ENCODE measurements at regions of chr6 and their contacts with region 1.

Region 1: DNA sequence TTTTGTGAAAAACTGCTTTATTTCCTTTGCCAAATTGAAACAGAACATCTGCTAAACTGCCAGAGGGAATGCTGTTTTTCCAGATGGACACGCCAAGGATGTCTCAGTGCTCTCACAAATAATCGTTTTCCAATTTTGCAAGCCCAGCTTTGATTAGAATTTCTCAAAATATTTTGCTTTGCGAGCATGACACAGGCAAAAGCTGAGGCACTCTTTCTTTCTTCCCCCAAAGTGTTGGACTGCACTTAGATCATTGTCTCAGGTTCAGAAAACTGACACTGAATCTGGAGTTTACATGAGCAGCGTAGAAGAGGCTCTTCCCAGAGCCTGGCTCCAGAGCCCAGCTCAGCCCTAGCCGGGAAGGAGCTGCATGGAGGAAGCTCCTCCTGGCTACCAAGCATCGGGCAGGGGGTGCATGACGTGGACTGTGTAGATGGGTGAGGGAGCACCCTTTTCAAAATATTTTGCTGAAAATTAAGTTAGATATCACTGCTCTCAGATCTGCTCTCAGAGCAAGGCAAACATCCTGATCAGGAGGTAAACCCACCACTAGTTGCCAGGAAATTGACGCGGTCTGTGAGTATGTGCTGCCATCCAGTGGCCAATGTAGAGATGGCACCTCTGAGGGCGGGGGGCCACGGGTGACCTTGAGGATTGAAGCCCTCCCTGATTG is 107.5 kb downstream of the SLC22A3 start:
- H3K4me3 ChIP-seq: no peak overlapping the region
- H3K27ac ChIP-seq: no peak overlapping the region
- H3K4me1 ChIP-seq: no peaks in the 10 kb centered on the region
- CTCF ChIP-seq: peak; percentile 93

Region 2: DNA sequence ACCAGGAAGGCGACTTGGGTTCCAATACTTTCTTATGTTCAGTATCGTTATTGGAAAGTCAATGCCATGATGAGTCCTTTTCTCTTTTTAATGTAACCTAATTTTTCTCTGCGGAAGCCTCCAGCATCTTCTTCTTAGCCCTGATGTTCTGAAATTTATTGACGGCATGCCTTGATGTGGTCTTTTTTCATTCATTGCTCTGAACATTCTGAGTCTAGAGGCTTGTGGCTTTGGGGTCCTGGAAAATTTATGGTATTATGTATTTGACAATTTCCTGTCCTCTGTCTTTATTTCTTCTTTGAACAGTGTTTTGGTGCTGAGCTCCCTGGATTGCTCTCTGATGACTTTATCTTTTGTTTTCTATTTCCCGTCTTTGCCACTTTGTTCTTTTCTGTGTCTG is 593.6 kb before region 1 on chr6:
- CTCF ChIA-PET with region 1: interaction called, 27 read pairs
- POLR2A ChIA-PET with region 1: no interaction called
- H3K4me3 ChIP-seq: no peak overlapping the region
- H3K27ac ChIP-seq: no peak overlapping the region
- H3K4me1 ChIP-seq: no peaks in the 10 kb centered on the region
- CTCF ChIP-seq: no peak

Region 3: GRCh38 chr6:160088069-160088783 is 367.5 kb before region 1 on chr6:
- CTCF ChIA-PET with region 1: interaction called, 44 read pairs
- POLR2A ChIA-PET with region 1: no interaction called
- H3K4me3 ChIP-seq: no peak overlapping the region
- H3K27ac ChIP-seq: no peak overlapping the region
- H3K4me1 ChIP-seq: no peaks in the 10 kb centered on the region
- CTCF ChIP-seq: no peak

Region 4: DNA sequence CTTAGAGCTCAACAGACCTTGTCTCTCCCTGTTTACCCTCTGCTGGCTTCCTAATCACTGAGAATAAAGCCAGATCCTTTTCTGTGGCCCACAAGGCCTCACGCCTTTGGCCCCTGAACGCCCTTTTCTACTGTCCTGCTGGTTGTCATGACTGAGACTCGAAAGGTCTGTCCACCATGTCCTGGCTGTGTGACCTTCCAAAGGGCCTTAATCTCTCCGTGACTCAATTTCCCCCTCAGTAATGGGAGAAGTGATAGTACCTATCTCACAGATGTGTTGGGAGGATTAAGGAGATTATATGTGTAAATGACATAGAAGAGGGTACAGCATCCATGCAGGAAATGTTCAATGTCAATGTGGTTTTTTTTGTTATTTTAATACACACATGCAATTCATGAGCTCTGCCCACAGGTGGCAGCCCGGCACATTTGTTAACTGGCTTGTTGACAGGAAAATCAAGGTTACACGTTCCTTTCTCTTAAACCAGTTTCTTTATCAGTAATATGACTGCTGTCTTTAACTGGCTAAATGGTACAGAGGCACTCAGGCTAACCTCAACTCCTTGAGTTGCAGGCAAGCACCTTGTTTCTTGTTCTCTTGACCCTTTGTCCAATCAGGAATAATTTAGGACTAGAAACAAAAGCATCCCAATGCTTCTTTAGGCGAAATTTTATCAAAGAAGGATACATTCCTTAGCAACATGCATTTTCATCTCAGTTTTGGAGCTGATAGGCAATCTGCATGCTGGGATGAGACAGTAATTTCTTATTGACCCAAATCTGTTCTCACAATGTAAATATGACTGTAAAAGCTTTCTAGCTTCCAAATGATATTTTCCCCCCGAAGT is 317.5 kb before region 1 on chr6:
- CTCF ChIA-PET with region 1: interaction called, 43 read pairs
- POLR2A ChIA-PET with region 1: no interaction called
- H3K4me3 ChIP-seq: no peak overlapping the region
- H3K27ac ChIP-seq: no peak overlapping the region
- H3K4me1 ChIP-seq: no peaks in the 10 kb centered on the region
- CTCF ChIP-seq: peak; percentile 39; the same call in 1 of the 2 replicates

Region 5: DNA sequence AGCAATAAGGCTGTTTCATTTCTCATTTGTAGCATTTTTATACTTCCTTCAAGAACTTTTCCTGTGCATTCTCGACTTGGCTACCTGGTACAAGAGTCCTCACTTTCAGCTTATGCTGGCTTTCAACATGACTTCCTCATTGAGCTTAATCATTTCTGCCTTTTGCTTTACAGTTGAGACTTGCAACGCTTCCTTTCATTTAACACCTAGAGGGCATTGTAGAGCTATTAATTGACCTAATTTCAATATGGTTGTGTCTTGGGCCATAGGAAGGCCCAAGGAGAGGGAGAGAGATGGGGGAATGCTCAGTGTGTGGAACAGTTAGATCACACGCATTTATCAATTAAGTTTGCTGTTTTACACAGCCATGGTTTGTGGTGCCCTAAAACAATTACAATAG is 234.3 kb before region 1 on chr6:
- CTCF ChIA-PET with region 1: interaction called, 35 read pairs
- POLR2A ChIA-PET with region 1: no interaction called
- H3K4me3 ChIP-seq: no peak overlapping the region
- H3K27ac ChIP-seq: no peak overlapping the region
- H3K4me1 ChIP-seq: no peaks in the 10 kb centered on the region
- CTCF ChIP-seq: no peak

Region 6: GRCh38 chr6:160297310-160297709 is 158.4 kb before region 1 on chr6:
- CTCF ChIA-PET with region 1: interaction called, 11 read pairs
- POLR2A ChIA-PET with region 1: no interaction called
- H3K4me3 ChIP-seq: no peak overlapping the region
- H3K27ac ChIP-seq: no peak overlapping the region
- H3K4me1 ChIP-seq: no peaks in the 10 kb centered on the region
- CTCF ChIP-seq: no peak

Region 7: DNA sequence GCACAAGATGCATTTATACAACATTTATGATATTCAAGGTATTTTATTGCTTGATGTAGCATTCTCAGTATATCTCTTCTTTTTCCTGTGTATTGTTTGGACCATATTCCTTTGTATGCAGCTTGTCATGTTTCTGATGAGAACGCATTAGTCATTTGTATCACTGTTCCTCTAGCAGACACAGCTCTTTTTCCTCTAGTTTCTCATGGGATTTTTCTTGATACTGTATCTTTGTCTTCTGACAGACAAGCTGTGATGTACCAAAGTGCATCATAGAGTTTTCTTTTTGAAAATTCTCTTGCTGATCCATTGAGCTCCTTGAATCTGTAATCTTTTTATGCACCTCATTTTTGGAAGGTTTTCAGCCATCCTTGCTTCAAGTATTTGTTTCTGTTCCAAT is 33.4 kb after region 1 on chr6:
- CTCF ChIA-PET with region 1: no interaction called
- POLR2A ChIA-PET with region 1: no interaction called
- H3K4me3 ChIP-seq: no peak overlapping the region
- H3K27ac ChIP-seq: no peak overlapping the region
- H3K4me1 ChIP-seq: no peaks in the 10 kb centered on the region
- CTCF ChIP-seq: no peak

Region 8: DNA sequence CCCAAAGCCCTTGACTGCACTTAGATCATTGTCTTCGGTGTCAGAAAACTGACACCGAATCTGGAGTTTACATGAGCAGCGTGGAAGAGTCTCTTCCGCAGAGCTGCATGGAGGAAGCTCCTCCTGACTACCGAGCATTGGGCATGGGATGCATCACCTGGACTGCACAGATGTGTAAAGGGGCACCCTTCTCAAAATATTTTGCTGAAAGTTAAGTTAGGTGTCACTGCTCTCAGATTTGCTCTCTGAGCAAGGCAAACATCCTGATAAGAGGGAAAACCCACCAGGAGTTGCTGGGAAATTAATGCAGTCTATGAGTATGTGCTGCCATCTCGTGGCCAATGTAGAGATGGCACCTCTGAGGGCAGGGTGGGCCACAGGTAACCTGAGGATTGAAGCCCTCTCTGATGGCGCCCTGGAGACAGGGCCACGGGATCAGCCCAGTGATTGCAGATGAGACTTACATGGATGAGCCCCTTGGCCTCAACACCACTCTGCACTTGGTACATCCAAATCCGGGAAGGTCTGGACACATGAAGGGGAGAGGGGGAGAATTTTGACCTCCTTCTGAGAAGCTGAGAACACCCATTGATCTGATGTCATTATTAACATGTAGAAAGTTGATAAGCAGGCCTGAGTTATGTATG is 78.5 kb after region 1 on chr6:
- CTCF ChIA-PET with region 1: interaction called, 13 read pairs
- POLR2A ChIA-PET with region 1: no interaction called
- H3K4me3 ChIP-seq: no peak overlapping the region; the same call in 1 of the 2 replicates
- H3K27ac ChIP-seq: no peak overlapping the region
- H3K4me1 ChIP-seq: no peaks in the 10 kb centered on the region
- CTCF ChIP-seq: no peak; the same call in 1 of the 2 replicates

Region 9: DNA sequence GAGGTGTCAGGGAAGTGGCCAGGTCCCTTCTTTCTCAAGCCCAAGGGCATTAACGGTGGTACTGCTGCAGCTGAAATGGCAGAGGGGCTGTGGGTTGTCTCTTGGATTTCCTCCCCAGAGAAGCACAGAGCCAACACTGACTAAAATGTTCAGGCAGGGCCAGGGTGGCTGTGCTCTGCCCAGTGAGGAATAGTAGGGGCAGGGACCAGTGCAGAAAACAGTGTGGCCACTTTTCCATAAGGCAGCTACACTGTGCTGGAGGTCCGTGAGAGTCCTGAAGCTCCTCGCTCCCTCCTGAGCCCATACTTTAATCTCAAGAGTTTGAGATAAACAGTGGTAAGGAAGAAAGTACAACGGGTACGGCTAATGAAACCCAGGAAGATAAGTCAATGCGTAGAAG is 203.9 kb after region 1 on chr6:
- CTCF ChIA-PET with region 1: no interaction called
- POLR2A ChIA-PET with region 1: no interaction called
- H3K4me3 ChIP-seq: no peak overlapping the region
- H3K27ac ChIP-seq: no peak overlapping the region
- H3K4me1 ChIP-seq: no peaks in the 10 kb centered on the region
- CTCF ChIP-seq: no peak